Posterior vena cava (tissue), 2 donors: ENCODE measurements at regions of chr1 and their contacts with region 1.

Region 1: DNA sequence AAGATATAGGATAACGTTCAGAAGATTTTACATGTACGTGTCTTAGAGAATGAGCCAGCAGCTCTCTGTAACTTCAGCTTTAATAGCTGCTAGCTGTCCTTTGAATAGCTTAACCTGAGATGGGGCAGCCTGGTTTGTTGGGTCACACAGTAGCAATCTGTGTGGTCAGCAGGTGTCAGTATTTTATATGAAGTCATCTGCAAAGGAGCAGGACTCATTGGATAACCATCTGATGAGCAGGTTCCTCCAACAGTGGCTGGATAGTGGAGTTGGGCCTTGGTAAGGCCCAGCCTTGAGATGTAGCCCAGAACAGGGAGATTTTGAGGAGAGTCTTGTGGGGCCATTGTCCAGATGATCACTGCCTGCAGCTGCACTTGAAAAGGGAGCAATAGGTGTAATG is 6.4 kb downstream of the GSTM5 start:
- DNase-seq: no peak

Region 2: GRCh38 chr1:109466452-109467300 is 251.8 kb before region 1 on chr1 and contains the start of gene SYPL2:
- intact Hi-C with region 1: no loop called
- DNase-seq: no peak
- total RNA-seq, gene SYPL2: 2.1 to 9.0 TPM

Region 3: DNA sequence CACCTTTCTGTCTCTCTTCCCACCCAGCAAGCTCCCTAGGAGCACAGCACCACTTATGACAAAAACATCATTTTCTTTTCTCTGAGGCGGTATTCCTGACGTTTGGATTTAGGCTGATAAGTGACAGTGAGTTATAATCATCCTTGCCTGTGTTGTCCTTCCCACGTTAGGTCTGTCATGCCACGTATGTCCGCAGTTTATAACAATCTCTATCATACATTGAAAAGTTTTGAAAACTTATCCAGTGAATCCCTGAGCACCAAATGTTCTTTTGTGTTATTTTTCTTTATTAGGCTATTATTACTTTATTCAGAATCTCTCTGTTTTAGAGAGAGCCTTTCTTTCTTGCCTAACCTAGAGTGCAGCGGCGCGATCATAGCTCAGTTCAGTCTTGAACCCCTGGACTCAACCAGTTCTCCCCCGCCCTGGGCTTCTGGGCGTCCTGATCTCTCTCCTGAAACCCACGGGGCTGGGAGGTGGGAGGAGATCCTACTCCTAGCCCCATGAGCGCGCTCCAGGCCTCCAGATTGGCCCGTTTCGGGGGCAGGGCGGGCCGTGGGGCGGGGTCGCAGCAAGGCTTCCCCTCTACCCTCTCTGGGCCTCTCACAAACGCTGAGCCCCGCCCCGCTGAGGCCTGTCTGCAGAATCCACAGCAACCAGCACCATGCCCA is 50.9 kb before region 1 on chr1 and contains the start of gene GSTM2:
- intact Hi-C with region 1: loop called in 1 of 2 experiments (anchors 10 kb)
- DNase-seq: peak; percentile 96
- total RNA-seq, gene GSTM2: 29.2 to 45.9 TPM

Region 4: DNA sequence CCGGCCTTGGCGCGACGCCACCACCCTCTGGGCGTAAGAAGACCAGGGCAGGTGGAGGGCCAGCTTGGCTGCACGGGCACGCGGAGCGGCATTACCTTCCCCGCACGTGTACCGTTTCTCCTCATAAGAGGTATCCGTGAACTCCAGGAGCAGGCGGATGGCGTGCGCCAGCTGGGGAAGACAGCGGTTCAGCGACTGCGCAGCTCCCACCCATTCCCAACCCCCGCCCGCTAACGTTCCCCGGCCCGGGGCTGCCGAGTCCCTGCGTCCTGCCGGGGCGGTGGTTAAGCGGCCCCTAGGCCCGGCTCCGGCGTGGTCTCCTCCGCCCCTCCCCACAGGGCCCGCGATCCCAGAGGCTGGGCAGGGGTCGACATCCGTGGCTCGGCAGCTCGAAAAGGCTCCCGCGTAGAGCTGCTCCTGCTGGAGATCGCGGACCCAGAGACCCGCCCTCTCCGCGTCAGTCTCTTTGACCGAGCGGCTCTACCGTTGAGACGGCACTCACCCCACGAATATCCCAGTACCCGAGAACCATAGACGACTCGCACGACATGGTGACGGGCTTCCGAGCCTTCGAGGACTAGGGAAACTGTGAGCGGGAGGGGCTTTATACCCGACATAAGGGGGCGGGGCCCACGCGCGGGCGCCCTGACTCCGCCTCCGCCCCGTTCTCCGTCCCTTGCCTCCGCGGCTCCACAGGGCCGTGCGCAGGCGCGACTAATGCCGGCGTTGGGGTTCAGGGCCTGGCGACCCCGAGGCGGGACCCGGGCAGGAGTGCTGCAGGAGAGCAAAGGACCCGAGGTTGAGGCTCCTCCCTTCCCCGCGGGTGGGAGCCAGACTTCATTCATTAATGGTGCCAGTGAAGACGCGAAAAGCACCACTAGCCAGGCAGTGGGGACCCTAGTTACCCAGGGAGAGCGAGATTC is 21.5 kb after region 1 on chr1:
- intact Hi-C with region 1: loop called in 1 of 2 experiments (anchors 1 kb)
- DNase-seq: peak; percentile 93

Region 5: DNA sequence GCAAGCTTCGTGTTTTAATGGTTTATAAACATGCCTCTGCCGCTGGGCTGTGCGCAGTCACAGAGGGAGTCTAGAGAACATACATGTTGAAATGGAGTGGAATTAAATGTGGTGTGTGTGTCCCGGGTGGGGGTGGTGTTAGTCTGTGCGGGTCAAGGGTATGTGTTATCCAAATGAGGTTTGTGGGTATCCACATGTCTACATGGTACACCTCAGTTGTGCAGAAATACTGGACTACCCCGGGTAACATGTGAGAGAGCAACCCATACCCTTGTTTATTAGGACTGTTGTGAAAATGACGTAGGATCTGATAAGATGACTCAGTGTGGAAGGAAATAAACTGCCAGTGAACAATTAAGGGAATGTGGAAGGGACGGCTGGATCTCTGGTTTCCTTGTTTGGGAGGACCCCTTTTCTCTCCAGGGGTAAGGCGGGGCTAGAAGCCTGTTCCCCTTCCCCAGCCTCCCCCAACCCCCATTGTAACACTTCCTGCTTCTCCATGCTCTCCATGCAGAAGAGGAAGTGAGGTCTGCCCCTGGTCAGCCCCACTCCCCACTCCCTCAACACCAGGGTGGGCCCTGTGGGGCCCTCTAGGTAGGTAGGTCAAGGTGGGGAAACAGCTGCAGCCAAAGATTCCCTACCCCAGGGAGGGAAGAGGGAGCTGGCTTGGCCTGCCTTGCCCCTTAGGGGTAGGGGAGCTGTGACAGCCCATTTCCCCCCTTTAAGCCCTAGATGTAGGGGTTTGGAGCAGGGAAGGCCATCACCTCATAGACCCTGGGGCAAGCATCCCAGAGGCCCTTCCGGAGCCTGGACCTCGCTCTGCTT is 44.5 kb after region 1 on chr1:
- intact Hi-C with region 1: loop called in 1 of 2 experiments (anchors 10 kb)
- DNase-seq: peak; percentile 75

Region 6: DNA sequence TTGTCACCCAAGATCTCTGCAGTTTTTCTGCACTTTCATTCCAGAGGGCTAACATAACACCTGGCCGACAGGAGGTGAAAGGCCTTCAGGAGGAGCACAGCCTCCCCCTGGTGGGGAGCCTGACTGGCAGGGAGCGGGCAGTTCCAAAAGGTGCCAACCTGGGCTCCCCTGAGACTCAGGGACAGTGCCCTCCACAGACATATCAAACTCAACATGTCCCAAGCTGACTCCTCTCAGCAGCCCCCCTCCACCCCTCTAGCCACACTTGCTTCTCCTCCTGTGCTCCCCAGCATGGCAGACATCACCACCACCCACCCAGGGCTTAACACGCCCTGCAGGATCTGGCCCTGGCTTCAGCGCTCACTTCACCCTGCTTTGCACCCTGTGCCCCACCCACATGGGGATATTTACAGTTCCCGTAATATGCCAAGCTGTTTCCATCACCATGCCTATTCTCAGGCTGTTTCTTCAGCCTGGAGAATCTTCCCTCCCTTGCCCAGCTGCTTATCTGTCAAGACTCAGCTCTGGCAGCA is 262.3 kb after region 1 on chr1:
- intact Hi-C with region 1: no loop called
- DNase-seq: no peak

Region 7: GRCh38 chr1:110187157-110187890 is 468.8 kb after region 1 on chr1:
- intact Hi-C with region 1: no loop called
- DNase-seq: peak; percentile 74